AG04449 (cell line): ENCODE measurements at regions of chr16 and their contacts with region 1.

Region 1: DNA sequence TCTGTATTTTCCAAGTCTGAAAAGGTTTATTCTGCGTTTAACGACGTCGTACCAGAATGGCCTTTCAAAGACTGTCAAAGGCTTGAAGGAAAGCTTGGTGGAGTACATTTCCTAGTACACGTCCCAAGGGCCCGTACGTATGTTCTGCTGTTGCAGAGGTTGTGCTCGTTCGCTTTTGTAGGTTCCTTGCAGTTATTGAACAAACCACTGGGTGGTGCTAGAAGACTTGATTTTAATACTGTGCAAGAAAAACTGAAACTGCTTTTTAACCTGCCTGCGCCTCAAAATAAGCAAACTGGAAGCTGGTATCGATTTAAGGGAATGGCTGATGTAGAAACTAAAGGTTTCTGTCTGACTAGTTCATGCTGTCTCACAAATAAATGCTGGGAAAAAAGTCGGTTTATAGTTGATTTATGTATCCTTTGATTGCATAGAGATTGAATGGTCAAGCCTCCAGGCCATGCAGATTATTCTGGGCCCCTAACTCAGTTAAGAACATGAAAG is 54.6 kb downstream of the USP10 start:
- DNase-seq: peak; percentile 67
- H3K4me3 ChIP-seq: no peak overlapping the region
- CTCF ChIP-seq: peak; percentile 56

Region 2: GRCh38 chr16:84532291-84532724 is 222.1 kb before region 1 on chr16:
- CTCF ChIA-PET with region 1: no interaction called
- POLR2A ChIA-PET with region 1: no interaction called
- DNase-seq: peak; percentile 92
- H3K4me3 ChIP-seq: no peak overlapping the region
- CTCF ChIP-seq: no peak

Region 3: GRCh38 chr16:84765616-84766580 is 11.5 kb after region 1 on chr16:
- CTCF ChIA-PET with region 1: interaction called, 74 read pairs
- POLR2A ChIA-PET with region 1: no interaction called
- DNase-seq: no peak
- H3K4me3 ChIP-seq: no peak overlapping the region
- CTCF ChIP-seq: no peak

Region 4: DNA sequence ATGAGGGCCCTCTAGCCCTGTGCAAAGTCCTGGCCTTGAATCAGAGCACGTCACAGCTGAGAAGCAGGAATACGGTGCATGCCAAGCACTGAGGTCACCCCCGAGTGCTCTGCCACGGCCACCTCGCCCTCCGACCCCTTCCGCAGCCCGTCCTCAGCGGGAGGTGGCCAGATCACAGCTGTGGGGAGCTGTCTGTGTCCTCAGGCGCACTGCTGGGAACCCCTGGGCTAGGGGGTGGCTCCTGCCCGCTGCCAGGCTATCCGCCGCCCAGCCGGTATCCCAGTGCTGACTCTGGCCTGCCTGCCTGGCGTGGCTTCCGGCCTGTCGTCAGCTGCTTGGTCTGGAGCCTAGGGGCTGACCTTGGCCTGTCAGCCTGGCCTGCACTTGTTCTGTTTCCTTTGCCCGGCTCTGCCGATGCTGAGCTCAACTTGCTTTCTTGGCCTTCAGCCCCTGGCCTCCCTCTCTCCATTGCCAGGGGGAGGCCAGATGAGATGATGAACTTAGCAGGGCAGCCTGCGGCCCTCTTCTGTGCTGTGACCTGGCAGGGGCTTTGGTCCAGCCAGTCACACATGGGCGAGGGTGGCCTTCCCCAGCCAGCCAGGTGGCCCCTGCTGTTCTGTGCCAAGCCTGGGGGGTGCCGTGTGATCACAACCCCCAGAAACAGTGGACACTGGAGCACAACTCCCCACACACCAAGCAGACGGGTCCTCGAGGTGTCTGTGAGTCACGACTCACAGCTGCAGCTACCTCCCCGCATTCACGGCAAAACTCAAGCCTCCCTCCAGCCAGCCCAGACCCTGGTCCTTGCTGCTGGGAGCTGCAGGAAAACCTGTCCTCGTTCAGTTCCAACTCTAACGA is 179.6 kb after region 1 on chr16:
- CTCF ChIA-PET with region 1: interaction called, 10 read pairs
- POLR2A ChIA-PET with region 1: no interaction called
- DNase-seq: no peak
- H3K4me3 ChIP-seq: no peak overlapping the region
- CTCF ChIP-seq: no peak

Region 5: GRCh38 chr16:84952335-84953189 is 198.2 kb after region 1 on chr16:
- CTCF ChIA-PET with region 1: interaction called, 492 read pairs
- POLR2A ChIA-PET with region 1: no interaction called
- DNase-seq: no peak
- H3K4me3 ChIP-seq: no peak overlapping the region
- CTCF ChIP-seq: peak; percentile 86

Region 6: GRCh38 chr16:84976644-84977400 is 222.4 kb after region 1 on chr16:
- CTCF ChIA-PET with region 1: interaction called, 475 read pairs
- POLR2A ChIA-PET with region 1: no interaction called
- DNase-seq: no peak
- H3K4me3 ChIP-seq: no peak overlapping the region
- CTCF ChIP-seq: no peak